HAP-1 (cell line): ENCODE measurements at regions of chr10 and their contacts with region 1.

Region 1: GRCh38 chr10:11424456-11425297 is 186.8 kb downstream of the USP6NL start:
- DNase-seq: peak; percentile 45 to 75
- H3K4me3 ChIP-seq: no peak overlapping the region
- H3K4me1 ChIP-seq: no peaks in the 10 kb centered on the region
- H3K27me3 ChIP-seq: no peaks in the 10 kb centered on the region

Region 2: DNA sequence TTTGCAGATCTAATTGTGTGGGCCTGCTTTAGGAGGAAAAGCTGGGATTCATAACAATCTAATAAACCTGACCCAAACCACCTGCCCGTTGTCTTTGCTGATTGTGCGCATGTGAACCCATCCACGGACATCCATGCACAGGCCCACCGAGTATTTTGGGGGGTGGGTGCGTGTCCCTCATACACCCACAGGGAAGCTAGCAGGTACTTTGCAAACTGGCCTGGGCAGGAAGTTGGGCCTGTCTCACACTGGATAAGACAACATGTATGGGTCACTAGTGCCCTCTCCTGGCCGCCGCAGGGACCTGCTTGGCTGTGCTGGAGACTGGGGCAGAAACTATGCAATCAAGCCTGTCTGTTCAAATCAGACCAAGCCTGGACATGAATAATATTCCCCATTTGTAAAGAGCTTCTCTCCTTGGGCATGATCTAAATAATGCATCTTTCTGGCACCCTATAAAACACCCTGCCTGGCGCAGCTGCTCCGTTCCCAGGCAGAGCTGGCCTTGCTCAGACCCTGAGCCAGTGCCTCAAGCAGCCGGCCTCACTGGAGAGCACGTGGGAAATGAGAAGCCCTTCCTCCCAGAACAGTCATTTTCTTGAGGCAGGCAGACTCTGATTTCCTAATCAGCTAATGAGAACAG is 333.3 kb after region 1 on chr10:
- in situ Hi-C with region 1: loop called (anchors 10 kb)
- DNase-seq: peak; percentile 74 to 92
- H3K4me3 ChIP-seq: no peak overlapping the region
- H3K4me1 ChIP-seq: peaks cover 12% of the 10 kb centered on the region
- H3K27me3 ChIP-seq: no peaks in the 10 kb centered on the region

Region 3: DNA sequence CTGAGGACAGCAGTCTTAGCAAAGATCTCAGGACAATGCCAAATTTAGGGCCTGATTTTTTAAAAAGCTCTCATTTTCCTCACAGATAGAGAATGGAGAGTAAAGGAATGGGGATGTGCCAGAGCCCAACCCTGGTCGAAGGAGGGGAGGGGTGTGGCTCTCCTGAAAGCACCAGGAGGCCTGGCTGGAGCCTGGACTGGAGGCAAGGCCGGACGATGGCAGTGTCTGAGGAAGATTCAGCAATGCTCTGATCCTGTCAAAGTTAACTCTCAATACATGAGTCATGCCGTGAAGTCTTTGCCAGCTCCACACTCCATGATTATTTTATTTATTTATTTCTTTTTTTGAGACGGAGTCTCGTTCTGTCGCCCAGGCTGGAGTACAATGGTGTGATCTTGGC is 509.6 kb after region 1 on chr10:
- in situ Hi-C with region 1: no loop called
- DNase-seq: peak in 1 of 2 experiments; percentile 36
- H3K4me3 ChIP-seq: no peak overlapping the region
- H3K4me1 ChIP-seq: peaks cover 37% of the 10 kb centered on the region
- H3K27me3 ChIP-seq: no peaks in the 10 kb centered on the region

Region 4: GRCh38 chr10:12279281-12279680 is 854.6 kb after region 1 on chr10:
- in situ Hi-C with region 1: no loop called
- DNase-seq: no peak
- H3K4me3 ChIP-seq: no peak overlapping the region
- H3K4me1 ChIP-seq: no peaks in the 10 kb centered on the region
- H3K27me3 ChIP-seq: no peaks in the 10 kb centered on the region